Posterior vena cava (tissue), 2 donors: ENCODE measurements at regions of chr17 and their contacts with region 1.

Region 1: DNA sequence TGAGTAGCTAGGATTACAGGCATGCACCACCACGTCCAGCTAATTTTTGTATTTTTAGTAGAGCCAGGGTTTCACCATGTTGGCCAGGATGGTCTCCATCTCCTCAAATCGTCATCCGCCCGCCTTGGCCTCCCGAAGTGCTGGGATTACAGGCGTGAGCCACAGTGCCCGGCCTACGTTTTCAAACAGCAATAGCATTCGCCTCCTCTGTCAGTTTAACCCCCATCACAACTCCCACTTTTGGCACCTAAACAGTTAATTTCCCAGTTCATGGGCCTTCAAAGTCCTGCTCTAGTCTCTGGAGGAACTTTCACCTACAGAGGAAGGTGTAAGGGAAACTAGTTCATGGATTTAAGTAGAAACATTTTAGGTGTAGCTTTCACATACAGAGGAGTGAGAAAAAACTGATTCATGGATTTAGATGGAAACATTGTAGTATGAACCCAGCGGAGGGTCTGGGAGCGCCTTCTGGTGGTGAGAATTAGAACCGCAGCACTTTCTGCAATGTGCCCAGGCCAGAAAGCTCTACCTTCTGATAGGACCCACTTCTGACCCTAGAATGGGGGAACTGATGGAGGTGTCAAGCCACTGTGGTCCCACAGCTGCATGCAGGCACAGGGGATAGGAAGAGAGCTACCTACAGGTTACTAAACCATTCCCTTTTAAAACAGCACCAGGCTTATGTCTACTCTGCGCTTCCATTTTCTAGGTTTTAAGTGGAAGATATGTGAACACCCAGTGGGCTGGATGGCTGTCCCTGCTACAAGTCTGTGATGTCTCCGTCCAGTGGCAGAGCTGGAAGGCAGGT is 12.0 kb upstream of the MEOX1 start:
- DNase-seq: peak; percentile 90

Region 2: GRCh38 chr17:43576563-43577229 is 97.0 kb before region 1 on chr17:
- intact Hi-C with region 1: loop called (anchors 1 to 2 kb)
- DNase-seq: peak; percentile 89